Ascending aorta (tissue), 2 donors: ENCODE measurements at regions of chr14 and their contacts with region 1.

Region 1: DNA sequence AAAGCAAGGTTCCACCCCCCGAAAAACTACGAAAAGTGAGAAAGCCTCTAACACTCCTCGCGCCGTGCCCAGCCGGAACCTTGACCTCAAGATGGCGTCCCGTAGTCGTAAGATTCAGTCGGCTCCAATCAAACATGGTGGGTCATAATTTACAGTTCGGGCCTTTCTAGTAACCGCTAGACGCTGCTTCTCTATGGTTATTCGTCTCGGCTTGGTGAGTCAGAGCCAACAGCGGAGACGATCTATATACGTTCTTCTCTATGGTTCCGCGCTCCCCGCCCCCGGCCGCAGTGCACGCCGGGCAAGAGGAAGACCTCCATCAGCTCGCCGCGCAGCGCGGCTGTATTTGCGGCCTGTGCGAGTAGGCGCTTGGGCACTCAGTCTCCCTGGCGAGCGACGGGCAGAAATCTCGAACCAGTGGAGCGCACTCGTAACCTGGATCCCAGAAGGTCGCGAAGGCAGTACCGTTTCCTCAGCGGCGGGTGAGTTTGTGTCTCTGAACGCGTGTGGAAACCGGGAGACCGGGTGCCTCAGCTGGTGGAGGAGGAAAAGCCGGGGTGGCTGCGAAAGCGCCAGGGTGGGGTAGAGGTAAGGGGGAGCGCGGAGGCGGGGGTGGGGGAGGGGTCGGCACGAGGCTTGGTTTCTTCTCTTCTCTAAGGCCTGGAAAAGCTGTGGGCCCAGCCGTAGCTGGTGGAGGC is at the start of gene RBM25:
- DNase-seq: peak; percentile 92 to 98
- H3K4me3 ChIP-seq: peak within 1 kb of the TSS; percentile 73 to 88
- H3K27ac ChIP-seq: peak within 1 kb of the TSS; percentile 91 to 94
- H3K4me1 ChIP-seq: peaks cover 0 to 14% of the 10 kb centered on the region in 2 donors
- H3K27me3 ChIP-seq: no peaks in the 10 kb centered on the region
- CTCF ChIP-seq: no peak
- total RNA-seq, gene RBM25: 59.6 TPM

Region 2: DNA sequence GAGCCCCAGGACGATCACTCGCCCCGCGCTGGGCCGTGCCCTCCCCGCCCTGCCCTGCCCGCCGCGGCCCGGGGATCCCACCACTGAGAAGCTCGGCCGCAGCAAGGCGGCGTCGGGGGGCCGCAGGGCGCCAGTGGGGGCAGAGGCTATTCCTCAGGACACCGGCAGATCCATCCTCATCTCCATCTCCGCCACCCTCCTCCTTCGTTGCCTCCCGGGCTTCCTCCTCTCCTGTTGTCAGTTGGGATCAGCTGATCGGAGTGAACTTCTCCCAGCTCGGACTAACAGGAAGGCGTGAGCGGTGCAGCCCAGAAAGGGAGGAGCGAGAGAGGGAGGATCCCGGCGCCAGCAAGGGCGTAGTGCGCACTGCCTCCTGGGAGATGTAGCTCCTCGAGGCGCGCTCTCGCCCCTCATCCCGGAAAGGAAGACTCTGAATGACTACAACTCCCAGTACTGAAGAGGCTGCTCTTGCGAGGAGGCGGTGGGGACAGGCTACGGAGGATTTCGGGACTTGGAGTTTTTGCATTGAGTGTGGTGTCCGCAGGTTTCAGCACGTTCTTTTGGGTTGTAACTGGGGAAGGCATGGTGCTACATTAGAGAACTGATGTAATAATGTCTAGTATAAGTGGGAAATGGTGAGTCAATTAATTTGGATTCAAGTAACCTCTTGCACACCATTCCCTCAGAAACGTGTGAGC is 31.4 kb before region 1 on chr14 and contains the start of gene ZFYVE1:
- intact Hi-C with region 1: loop called (anchors 1 kb)
- DNase-seq: peak; percentile 95 to 99
- H3K4me3 ChIP-seq: peak within 1 kb of the TSS; percentile 62 to 93
- H3K27ac ChIP-seq: peak within 1 kb of the TSS; percentile 79 to 94
- H3K4me1 ChIP-seq: peaks cover 5 to 10% of the 10 kb centered on the region in 2 donors
- H3K27me3 ChIP-seq: no peaks in the 10 kb centered on the region
- CTCF ChIP-seq: no peak
- total RNA-seq, gene ZFYVE1: 73.9 TPM

Region 3: DNA sequence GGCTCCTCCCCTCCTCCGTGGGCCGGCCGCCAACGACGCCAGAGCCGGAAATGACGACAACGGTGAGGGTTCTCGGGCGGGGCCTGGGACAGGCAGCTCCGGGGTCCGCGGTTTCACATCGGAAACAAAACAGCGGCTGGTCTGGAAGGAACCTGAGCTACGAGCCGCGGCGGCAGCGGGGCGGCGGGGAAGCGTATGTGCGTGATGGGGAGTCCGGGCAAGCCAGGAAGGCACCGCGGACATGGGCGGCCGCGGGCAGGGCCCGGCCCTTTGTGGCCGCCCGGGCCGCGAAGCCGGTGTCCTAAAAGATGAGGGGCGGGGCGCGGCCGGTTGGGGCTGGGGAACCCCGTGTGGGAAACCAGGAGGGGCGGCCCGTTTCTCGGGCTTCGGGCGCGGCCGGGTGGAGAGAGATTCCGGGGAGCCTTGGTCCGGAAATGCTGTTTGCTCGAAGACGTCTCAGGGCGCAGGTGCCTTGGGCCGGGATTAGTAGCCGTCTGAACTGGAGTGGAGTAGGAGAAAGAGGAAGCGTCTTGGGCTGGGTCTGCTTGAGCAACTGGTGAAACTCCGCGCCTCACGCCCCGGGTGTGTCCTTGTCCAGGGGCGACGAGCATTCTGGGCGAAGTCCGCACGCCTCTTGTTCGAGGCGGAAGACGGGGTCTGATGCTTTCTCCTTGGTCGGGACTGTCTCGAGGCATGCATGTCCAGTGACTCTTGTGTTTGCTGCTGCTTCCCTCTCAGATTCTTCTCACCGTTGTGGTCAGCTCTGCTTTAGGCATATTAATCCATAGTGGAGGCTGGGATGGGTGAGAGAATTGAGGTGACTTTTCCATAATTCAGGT is 78.2 kb after region 1 on chr14 and contains the start of gene PSEN1:
- intact Hi-C with region 1: loop called (anchors 2 kb)
- DNase-seq: peak; percentile 86 to 98
- H3K4me3 ChIP-seq: peak within 1 kb of the TSS; percentile 93 to 97
- H3K27ac ChIP-seq: peak within 1 kb of the TSS; percentile 96 to 97
- H3K4me1 ChIP-seq: peaks cover 9 to 11% of the 10 kb centered on the region in 2 donors
- H3K27me3 ChIP-seq: no peaks in the 10 kb centered on the region
- CTCF ChIP-seq: no peak
- total RNA-seq, gene PSEN1: 15.2 TPM

Region 4: DNA sequence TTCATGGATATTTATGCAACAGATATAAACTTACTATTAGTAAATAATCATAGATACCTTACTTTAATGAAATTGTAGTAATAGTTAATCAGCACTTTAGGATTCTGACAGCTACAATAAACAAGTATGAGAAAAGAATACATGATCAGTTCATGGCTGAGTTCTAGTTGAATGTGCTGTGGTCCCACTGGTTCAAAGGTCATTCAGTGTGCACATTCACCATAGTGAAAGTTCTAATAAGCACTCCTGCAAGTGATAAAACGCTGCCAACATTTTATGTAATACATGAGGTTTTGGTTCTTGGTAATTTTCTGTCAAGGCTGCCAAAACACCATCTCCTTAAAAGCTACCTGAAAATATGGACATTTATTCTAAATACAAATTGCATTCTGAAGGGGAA is 307.4 kb after region 1 on chr14:
- intact Hi-C with region 1: no loop called
- DNase-seq: no peak
- H3K4me3 ChIP-seq: no peak overlapping the region
- H3K27ac ChIP-seq: no peak overlapping the region
- H3K4me1 ChIP-seq: no peaks in the 10 kb centered on the region
- H3K27me3 ChIP-seq: no peaks in the 10 kb centered on the region
- CTCF ChIP-seq: no peak